ENCODE measurements at regions of chr6 and their contacts with region 1.

Region 1: DNA sequence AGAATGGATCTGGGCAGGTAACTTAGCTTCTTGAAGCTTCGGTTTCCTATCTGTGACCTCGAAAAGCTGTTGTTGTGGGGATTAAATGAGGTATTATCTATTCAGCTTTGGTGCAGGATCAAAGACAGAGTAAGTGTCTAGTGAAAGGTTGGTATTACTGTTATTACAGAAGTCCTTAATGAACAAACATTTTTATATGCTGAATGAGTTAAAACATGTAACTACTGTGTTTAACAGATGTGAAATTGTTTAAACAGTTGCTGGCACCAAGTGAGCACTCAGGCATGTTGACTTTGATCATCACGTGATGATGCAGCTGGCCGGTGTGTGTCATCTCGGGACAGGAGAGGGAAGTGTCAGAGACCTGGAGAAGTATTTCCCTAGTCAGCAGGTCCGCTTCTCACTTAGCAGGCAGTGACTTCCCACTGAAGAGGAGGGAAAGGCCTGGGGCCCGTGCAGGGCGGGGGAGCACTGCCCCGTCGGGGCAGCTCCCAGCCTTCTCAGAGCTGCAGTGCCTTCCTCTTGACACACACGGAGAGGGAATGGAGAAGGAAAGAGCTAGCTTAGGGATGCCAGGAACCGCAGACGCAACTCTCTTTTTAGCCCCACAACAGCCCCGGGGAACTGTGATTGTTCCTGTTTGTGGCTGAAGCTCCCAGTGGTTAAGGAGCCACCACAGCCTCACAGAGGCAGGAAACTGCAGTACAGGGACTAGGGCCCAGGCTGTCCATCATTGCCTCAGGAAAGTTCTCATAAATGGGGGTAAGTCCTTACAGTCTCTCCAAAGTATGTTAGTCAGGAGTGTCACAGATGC is 18.0 kb downstream of the TUBB2A start:
- DNase-seq: no peak
- ATAC-seq: no peak
- H3K4me3 ChIP-seq: no peak overlapping the region
- H3K4me3 Mint-ChIP-seq: no peak overlapping the region
- H3K27ac ChIP-seq: no peak overlapping the region
- H3K27ac Mint-ChIP-seq: no peak overlapping the region
- H3K4me1 ChIP-seq: no peaks in the 10 kb centered on the region
- H3K4me1 Mint-ChIP-seq: no peaks in the 10 kb centered on the region
- H3K27me3 ChIP-seq: no peaks in the 10 kb centered on the region
- H3K27me3 Mint-ChIP-seq: no peaks in the 10 kb centered on the region
- CTCF ChIP-seq: no peak

Region 2: DNA sequence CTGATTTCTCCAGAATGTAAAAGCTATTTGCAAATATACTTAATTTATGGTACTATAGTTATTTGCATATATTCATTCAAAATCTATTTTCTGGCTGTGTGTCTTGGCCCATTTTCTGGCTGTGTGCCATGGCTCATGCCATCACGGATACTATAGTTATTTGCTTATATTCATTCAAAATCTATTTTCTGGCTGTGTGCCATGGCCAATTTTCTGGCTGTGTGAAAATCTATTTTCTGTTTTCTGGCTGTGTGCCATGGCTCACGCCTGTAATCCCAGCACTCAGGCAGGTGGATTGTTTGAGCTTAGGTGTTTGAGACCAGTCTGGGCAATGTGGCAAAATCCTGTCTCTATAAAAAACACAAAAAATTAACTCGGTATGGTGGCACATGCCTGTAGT is 99.9 kb before region 1 on chr6:
- CTCF ChIA-PET with region 1: no interaction called
- POLR2A ChIA-PET with region 1: no interaction called
- intact Hi-C with region 1: no loop called
- DNase-seq: no peak
- ATAC-seq: no peak
- H3K4me3 ChIP-seq: no peak overlapping the region
- H3K4me3 Mint-ChIP-seq: no peak overlapping the region
- H3K27ac ChIP-seq: no peak overlapping the region
- H3K27ac Mint-ChIP-seq: no peak overlapping the region
- H3K4me1 ChIP-seq: no peaks in the 10 kb centered on the region
- H3K4me1 Mint-ChIP-seq: no peaks in the 10 kb centered on the region
- H3K27me3 ChIP-seq: no peaks in the 10 kb centered on the region
- H3K27me3 Mint-ChIP-seq: no peaks in the 10 kb centered on the region
- CTCF ChIP-seq: no peak

Region 3: DNA sequence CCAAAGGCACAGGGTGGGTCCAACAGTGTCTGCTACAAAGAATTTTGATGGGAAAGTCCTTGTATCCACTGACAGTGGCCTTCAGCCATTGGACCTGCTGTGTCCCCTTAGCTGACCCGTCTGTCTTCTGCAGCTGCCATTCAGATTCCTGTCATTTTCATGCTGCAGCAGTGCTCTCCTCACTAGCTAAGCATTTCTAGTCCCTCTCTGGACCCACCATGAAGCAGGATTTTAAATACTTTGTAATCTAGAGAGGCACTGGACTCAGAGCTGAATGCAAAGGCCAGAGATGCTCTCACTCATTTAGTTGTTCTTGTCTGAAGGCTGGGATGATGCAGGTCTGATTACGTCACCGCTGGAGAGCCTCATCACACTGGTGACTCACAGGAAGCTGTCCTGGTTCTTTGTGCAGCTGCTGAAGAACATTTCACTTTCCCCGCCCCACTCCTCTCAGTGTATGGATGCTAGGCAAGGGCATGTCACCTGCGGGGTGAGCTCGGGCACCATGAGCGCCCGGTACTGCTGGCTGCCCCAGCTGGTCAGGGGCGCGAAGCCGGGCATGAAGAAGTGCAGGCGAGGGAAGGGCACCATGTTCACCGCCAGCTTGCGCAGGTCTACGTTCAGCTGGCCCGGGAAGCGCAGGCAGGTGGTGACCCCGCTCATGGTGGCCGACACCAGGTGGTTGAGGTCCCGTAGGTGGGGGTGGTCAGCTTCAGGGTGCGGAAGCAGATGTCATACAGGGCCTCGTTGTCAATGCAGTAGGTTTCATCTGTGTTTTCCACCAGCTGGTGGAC is 37.5 kb after region 1 on chr6:
- CTCF ChIA-PET with region 1: no interaction called
- POLR2A ChIA-PET with region 1: no interaction called
- intact Hi-C with region 1: loop called in 1 of 2 experiments (anchors 5 kb)
- DNase-seq: peak in 5 of 9 experiments; percentile 11 to 41 (median 35)
- ATAC-seq: peak; percentile 54
- H3K4me3 ChIP-seq: no peak overlapping the region
- H3K4me3 Mint-ChIP-seq: no peak overlapping the region
- H3K27ac ChIP-seq: no peak overlapping the region
- H3K27ac Mint-ChIP-seq: no peak overlapping the region
- H3K4me1 ChIP-seq: no peaks in the 10 kb centered on the region
- H3K4me1 Mint-ChIP-seq: no peaks in the 10 kb centered on the region
- H3K27me3 ChIP-seq: no peaks in the 10 kb centered on the region
- H3K27me3 Mint-ChIP-seq: peaks cover 9% of the 10 kb centered on the region
- CTCF ChIP-seq: no peak

Measured in CD8-positive, alpha-beta T cell (primary cell).